ENCODE measurements at regions of chr7 and their contacts with region 1.

Region 1: DNA sequence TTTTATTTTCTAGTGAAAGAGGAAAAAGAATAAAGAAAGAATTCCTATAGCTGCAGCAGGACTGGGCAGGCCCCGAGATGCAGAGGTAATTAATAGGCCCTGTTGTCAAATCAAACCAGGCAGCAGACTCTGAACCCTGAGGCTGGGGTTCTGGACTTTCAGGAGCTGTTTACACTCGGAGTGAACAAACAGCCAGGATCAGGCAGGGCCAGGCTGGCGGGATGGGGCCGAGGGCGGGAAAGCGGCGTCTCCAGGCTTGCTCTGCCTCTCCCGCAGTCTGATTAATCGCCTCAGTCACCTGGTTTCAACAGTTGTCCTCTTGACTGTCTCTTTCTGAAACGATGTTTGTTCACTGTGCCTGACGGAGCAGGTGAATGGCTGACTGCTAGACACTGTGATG is 675.4 kb upstream of the FOXK1 start:
- DNase-seq: peak; percentile 83
- H3K4me3 ChIP-seq: peak overlapping the region in 1 of 3 experiments; percentile 40
- H3K27ac ChIP-seq: peak overlapping the region; percentile 43
- H3K4me1 ChIP-seq: no peaks in the 10 kb centered on the region
- H3K27me3 ChIP-seq: no peaks in the 10 kb centered on the region
- CTCF ChIP-seq: no peak

Region 2: DNA sequence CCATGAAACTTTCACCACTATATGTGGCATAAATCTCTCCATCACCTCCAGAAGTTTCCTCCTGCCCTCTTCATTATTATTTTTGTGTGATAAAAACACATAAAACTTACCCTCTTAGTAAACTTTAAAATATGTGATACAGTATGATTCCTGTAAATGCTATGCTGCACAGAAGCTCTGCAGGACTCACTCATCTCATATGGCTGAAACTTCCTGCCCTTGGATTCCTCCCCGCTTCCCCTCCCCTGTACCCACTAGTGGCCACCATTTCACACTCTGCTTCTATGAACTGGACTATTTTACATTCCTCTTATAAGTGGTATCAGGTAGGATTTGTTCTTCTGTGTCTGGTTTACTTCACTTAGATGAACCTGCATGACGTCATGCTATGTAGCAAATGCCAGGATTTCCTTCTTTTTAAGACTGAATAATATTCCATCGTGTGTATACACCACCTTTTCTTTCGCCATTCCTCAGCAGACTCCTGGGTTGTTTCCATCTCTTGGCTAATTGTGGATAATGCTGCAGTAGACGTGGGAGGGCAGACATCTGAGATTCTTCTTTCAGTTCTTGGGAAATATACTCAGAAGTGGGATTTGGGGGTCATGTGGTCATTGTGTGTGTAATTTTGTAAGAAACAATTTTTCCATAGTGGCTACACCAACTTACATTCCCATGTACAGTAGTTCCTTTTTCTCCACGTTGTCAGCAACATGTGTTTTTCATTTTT is 370.4 kb before region 1 on chr7:
- CTCF ChIA-PET with region 1: no interaction called
- dilution Hi-C with region 1: no loop called
- in situ Hi-C with region 1: no loop called
- intact Hi-C with region 1: no loop called
- DNase-seq: no peak
- H3K4me3 ChIP-seq: no peak overlapping the region
- H3K27ac ChIP-seq: no peak overlapping the region
- H3K4me1 ChIP-seq: no peaks in the 10 kb centered on the region
- H3K27me3 ChIP-seq: no peaks in the 10 kb centered on the region
- CTCF ChIP-seq: no peak

Region 3: DNA sequence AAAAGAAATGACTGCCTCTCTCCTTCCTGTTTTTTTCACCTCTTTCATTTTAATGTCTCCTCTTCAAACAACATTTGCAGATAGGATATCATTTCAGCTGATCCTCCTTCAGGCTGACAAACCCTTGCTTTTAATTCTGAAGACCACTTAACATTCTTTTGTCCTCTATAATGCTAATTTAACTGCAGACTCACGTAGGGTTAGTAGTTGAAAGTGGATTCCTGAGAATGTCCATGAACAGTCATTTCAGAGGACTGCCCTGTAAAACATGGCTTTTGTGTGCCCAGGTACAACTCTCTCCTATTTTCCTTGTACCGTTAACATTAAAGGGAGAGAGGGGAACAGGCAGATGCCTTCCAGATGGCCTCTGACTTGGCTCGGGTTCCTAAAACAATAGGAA is 181.2 kb before region 1 on chr7:
- CTCF ChIA-PET with region 1: no interaction called
- dilution Hi-C with region 1: no loop called
- in situ Hi-C with region 1: no loop called
- intact Hi-C with region 1: no loop called
- DNase-seq: no peak
- H3K4me3 ChIP-seq: no peak overlapping the region
- H3K27ac ChIP-seq: no peak overlapping the region
- H3K4me1 ChIP-seq: no peaks in the 10 kb centered on the region
- H3K27me3 ChIP-seq: no peaks in the 10 kb centered on the region
- CTCF ChIP-seq: no peak

Region 4: GRCh38 chr7:3922175-3922635 is 84.5 kb before region 1 on chr7:
- CTCF ChIA-PET with region 1: no interaction called
- dilution Hi-C with region 1: no loop called
- in situ Hi-C with region 1: no loop called
- intact Hi-C with region 1: loop called (anchors 2 kb)
- DNase-seq: peak; percentile 70
- H3K4me3 ChIP-seq: no peak overlapping the region
- H3K27ac ChIP-seq: no peak overlapping the region
- H3K4me1 ChIP-seq: no peaks in the 10 kb centered on the region
- H3K27me3 ChIP-seq: no peaks in the 10 kb centered on the region
- CTCF ChIP-seq: peak in 1 of 2 donors; percentile 33

Region 5: DNA sequence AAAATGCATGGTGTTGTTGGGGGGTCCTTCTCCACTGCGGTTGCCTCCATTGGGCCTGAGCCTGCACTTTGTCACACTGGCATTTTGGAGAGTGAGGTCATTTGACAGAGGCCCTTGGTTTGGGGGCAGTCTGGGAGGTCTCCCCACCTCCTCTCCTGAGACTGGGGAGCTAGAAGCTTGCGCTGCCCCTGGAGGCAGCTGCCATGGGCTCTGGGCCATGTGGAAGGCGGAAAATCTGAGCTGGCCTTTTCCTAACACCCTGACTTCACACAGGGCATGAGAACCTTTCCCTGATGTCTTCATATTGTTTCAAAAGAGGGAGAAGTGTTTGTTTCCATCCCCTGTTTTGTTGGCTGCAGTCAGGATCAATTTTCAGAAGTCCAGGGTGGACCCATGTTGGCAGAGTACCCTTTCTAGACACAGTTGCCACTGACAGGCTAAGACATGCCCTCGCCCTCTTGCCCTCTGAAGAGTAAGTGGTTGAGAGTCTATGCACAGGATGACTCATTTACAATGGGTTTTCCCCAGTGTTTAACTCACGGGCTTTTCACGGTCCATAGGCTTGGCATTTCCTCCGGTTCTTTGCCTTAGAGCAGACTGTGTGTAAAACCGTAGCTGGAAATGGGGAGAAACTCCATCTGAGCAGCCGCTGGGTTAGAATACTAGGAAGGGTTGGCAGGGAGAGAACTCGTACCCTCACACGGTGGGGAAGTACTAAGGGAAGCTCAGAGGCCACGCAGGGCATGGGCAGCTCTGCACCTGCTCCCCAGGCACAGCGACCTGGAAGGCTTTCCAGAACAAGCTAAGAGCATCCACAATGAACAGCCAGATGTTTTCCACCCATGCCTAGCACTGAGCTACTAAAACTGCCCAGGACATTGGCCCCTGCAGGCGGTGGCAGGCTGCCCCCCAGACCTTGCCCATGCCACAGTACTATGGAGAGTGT is 50.7 kb before region 1 on chr7:
- CTCF ChIA-PET with region 1: no interaction called
- dilution Hi-C with region 1: no loop called
- in situ Hi-C with region 1: no loop called
- intact Hi-C with region 1: loop called (anchors 2 kb)
- DNase-seq: peak; percentile 95
- H3K4me3 ChIP-seq: no peak overlapping the region
- H3K27ac ChIP-seq: no peak overlapping the region
- H3K4me1 ChIP-seq: peaks cover 11% of the 10 kb centered on the region
- H3K27me3 ChIP-seq: no peaks in the 10 kb centered on the region
- CTCF ChIP-seq: no peak

Measured in mammary epithelial cell (primary cell).